BJ (cell line): ENCODE measurements at regions of chr11 and their contacts with region 1.

Region 1: DNA sequence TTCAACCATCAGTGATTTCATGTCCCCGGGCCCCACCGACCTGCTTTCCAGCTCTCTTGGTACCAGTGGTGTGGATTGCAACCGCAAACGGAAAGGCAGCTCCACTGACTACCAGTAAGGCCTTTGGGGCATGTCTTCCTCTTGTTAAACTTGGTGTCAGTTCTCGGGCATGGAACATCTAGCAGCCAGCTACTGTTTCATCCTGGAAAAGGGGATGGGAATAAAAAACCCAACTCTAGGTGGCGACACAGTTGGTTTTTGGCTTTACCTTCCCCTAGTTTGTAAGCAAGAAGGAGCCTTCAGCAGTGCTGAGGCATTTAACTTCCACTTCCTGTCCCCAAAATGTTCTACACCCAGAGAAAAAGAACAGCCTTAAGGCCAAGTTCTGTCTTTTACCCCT is 76.7 kb downstream of the BMAL1 start:
- DNase-seq: no peak
- H3K4me3 ChIP-seq: no peak overlapping the region
- H3K27me3 ChIP-seq: no peaks in the 10 kb centered on the region
- CTCF ChIP-seq: peak; percentile 35

Region 2: DNA sequence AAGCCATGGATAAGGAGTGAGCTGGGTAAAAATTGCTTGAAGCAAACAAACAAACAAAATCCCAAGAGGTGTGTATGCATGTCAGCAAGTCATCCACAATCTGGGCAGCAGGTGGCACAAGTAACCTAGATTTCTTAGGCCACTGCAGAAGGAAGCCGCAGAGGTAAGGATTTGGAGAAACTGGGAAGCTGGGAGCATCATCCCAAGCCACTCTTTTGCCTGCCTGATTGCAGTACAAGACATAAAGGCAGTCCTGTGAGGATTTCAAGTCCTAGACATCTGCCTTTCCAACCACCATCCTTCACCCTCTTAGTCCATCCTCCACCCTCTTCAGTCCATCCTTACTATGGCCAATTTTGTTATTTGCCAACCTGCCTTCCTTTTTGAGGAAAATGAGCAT is 143.9 kb before region 1 on chr11:
- CTCF ChIA-PET with region 1: interaction called, 24 read pairs
- POLR2A ChIA-PET with region 1: no interaction called
- DNase-seq: peak; percentile 26
- H3K4me3 ChIP-seq: no peak overlapping the region
- H3K27me3 ChIP-seq: no peaks in the 10 kb centered on the region
- CTCF ChIP-seq: peak; percentile 55

Region 3: DNA sequence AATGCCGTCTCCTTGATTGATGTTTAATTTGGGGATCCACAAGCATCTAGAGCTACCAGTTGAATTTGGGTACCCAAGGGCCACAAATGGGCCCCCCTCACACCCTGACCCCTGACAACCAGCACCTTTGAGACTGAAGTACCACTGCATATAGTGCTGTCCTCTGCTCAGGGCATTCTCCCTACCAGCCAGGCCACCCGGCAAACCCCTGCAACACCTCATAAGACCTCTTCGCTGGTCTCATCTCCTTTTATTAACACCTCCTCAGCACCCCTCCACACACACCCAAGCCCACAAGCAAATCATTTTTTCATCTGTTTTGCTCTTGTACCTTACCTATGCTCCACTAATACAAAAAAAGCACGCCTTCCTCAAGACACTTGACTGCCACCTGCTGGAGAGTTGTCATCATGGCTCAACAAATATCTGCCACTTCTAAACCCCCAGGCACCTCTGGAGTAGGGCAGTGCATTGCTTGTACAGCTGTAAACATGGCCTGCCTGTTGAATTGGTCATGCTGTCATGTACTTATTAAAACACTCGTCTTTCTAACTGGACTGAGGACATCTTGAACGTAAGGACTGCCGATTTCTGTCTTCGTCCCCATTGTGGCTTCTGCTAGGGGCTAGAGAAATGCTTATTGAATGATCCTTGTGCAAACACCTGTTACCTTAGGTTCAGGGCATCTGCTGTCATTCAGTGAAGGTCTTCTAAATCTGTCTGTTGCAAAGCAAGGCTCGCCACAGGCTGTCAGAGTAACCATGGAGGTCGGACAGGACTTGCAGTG is 10.2 kb before region 1 on chr11:
- CTCF ChIA-PET with region 1: interaction called, 19 read pairs
- POLR2A ChIA-PET with region 1: no interaction called
- DNase-seq: no peak
- H3K4me3 ChIP-seq: no peak overlapping the region
- H3K27me3 ChIP-seq: no peaks in the 10 kb centered on the region
- CTCF ChIP-seq: peak; percentile 79

Region 4: GRCh38 chr11:13384908-13385640 is 30.7 kb after region 1 on chr11:
- CTCF ChIA-PET with region 1: interaction called, 30 read pairs
- POLR2A ChIA-PET with region 1: no interaction called
- DNase-seq: no peak
- H3K4me3 ChIP-seq: no peak overlapping the region
- H3K27me3 ChIP-seq: no peaks in the 10 kb centered on the region
- CTCF ChIP-seq: peak; percentile 73

Region 5: GRCh38 chr11:13465909-13466371 is 111.6 kb after region 1 on chr11:
- CTCF ChIA-PET with region 1: interaction called, 10 read pairs
- POLR2A ChIA-PET with region 1: no interaction called
- DNase-seq: no peak
- H3K4me3 ChIP-seq: no peak overlapping the region
- H3K27me3 ChIP-seq: peaks cover 9% of the 10 kb centered on the region; the same call in 1 of the 2 replicates
- CTCF ChIP-seq: peak; percentile 62

Region 6: DNA sequence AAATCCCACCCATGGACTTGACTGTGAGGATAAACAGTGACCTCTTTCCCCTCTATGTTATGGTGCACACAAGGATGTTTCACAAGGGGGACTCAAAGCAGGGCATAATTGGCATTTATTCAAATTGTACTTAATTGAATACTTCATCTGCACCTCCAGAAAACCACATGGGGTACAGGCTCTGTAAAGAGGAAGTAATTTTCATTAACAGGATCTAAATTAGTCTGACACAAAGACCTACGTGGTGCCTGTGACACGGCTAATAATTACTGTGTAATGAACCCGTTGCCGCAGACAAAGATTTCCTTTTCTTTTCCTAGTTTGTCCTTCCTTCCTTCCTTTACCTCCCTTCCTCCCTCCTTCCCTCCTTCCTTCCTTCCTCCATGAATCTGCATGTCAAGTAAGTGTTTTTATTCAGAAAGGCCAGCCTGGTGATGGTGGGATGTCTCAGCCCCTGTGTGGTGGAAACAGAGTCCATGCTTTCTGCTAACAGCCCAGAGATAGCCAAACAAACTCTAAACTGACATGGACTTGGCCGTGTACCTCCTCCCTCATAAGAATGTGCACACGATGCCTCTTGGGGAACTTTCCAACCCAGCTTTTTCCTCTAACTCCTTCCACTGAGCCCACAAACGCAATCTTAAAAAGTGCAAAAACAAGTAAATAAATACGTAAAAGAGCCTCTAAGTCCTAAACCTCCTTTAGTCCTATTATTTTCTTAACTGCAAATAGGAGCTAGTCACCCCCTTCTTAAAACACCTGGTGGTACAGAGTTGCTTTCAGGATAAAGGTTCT is 1879.2 kb after region 1 on chr11:
- CTCF ChIA-PET with region 1: no interaction called
- POLR2A ChIA-PET with region 1: no interaction called
- DNase-seq: no peak
- H3K4me3 ChIP-seq: no peak overlapping the region
- H3K27me3 ChIP-seq: no peaks in the 10 kb centered on the region
- CTCF ChIP-seq: no peak